Posterior vena cava (tissue), 2 donors: ENCODE measurements at regions of chr6 and their contacts with region 1.

Region 1: GRCh38 chr6:37643851-37644672 is 53.6 kb downstream of the MDGA1 start:
- DNase-seq: peak; percentile 76

Region 2: GRCh38 chr6:37353761-37354525 is 290.1 kb before region 1 on chr6 and contains the start of gene RNF8:
- intact Hi-C with region 1: no loop called
- DNase-seq: peak; percentile 98
- total RNA-seq, gene RNF8: 13.6 to 14.0 TPM

Region 3: GRCh38 chr6:37391120-37391519 is 252.9 kb before region 1 on chr6:
- intact Hi-C with region 1: no loop called
- DNase-seq: no peak

Region 4: GRCh38 chr6:37679539-37680476 is 35.7 kb after region 1 on chr6:
- intact Hi-C with region 1: no loop called
- DNase-seq: no peak

Region 5: DNA sequence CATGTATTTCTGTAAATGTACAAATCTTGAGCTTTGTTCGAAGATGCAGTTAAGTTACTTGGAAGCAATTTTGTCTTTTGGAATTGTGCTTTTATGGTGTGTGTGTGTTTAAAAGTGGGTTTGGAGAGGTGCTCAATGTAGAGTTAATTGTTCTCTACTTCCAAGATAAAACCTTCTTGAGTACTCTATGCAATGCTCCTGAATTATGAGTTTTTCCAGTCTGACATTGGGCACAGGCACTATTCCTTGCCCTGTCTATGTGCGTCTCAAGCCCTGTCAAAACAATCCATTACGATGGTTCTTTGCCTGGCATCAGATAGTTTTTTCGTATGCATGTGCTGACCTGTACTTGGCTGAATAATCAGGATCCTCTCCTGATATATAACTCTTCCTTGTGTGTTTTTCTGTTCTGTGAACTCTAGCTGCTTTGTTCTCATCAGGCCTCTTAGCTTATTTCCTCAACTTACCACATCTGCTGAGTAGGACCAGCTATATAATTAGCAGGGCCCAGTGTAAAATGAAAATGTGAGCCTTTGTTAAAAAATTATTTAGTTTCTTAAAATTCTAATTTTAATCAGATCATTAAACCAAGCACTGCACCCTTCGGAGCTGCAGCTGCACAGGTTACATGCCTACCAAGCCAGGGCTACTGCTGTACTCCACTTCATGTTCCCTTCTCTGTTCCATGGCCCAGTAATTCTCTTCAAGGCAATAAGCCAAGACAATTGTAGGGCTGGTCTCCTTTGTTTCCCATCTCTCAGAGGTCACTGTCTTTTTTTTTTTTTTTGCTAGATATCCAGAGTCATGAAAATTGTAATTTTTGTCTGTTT is 335.5 kb after region 1 on chr6:
- intact Hi-C with region 1: loop called in 1 of 2 experiments (anchors 5 kb)
- DNase-seq: no peak